ENCODE measurements at regions of chr5 and their contacts with region 1.

Region 1: DNA sequence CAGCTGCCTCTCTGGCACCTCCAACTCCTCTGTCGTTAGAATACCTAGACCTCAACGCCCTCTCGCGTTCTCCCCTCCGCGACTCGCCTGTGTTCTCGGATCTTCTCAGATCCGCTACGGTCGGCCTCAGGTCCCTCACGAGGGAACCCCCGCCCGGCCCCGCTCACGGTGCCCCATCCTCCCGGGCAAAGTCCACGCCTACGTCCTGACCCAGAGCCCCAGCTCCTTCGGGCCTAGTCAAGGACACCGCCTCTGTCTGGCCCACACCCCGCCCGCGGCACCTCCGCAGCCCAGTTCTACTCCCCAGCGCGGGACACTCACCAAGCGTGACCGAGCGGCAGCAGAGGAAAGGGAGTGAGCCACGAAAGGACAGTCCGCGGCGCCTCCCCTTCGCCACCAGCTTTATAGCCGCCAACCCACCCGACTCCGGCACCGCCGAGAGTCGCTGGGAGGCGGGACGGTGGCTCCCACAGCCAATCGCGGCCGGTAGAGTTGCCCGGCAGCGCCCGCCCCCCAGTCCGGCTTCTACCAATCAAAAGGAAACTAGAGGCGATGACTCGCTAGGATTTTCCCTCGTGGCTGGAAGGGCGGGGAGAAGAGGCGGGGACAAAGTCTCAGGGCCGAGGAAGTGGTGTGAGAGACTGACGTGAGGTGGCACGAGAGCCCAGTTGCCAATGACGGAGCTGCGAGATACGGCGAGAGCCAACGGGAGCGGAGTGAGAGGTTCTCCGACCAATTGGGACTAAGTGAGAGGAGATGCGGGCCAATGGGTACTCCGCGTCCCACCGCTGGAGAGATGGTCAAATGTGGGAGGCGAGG is at the start of gene HMGCS1:
- DNase-seq: peak; percentile 99
- H3K4me3 Mint-ChIP-seq: peak within 1 kb of the TSS; percentile 96
- H3K27ac Mint-ChIP-seq: peak within 1 kb of the TSS; percentile 94
- H3K4me1 Mint-ChIP-seq: peaks cover 72% of the 10 kb centered on the region
- H3K27me3 Mint-ChIP-seq: peaks cover 2% of the 10 kb centered on the region
- total RNA-seq, gene HMGCS1: 158 to 162 TPM

Region 2: DNA sequence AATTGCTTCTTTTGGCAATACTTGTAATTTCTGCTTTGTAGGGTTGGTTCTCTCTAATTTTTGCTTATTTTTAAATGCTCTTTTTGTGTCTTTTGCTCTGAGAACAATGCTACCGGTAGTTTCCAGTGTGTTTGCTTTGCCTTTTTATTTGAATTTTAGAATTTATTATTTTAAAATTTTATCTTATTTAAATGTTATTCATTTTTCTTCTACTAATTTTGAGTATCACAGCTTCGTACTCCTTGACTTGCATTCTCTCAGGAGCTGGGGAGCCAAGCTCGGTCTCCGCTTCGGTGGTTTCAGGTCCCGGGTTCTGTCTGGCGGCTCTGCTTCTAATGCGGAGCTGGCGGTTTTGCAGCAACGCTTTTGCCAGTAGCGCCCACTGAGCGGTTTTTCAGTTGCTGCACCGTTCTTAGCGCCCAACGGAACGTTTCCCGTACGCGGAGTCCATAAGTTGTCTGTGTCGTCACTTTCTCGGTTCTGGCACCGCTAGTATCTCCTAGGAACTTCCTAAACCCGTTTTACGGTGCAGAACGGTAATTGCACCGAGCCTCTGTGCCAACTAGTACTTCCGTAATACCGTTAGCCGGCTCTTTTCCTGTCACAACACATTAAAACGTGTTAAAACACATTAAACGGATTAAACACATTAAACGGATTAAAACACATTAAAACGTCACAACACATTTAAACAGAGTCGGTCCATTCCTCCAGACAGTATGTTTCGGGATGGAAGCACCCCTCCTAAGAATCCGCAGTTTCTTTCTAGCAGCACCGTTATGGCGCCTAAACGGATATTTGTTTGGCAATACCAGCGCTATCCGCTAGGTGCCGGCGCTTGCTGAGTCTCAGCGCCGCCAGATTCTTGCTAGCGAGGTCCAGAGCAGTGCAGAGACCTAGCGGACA is 318.7 kb before region 1 on chr5:
- CTCF ChIA-PET with region 1: no interaction called
- POLR2A ChIA-PET with region 1: interaction called, 4 read pairs
- intact Hi-C with region 1: loop called (anchors 2 kb)
- DNase-seq: peak; percentile 93
- H3K4me3 Mint-ChIP-seq: peak overlapping the region; percentile 87
- H3K27ac Mint-ChIP-seq: peak overlapping the region; percentile 94
- H3K4me1 Mint-ChIP-seq: peaks cover 25% of the 10 kb centered on the region
- H3K27me3 Mint-ChIP-seq: no peaks in the 10 kb centered on the region

Region 3: GRCh38 chr5:43105369-43106289 is 207.6 kb before region 1 on chr5:
- CTCF ChIA-PET with region 1: interaction called, 17 read pairs
- POLR2A ChIA-PET with region 1: interaction called, 4 read pairs
- intact Hi-C with region 1: loop called (anchors 1 kb)
- DNase-seq: peak; percentile 92
- H3K4me3 Mint-ChIP-seq: peak overlapping the region; percentile 75
- H3K27ac Mint-ChIP-seq: peak overlapping the region; percentile 79
- H3K4me1 Mint-ChIP-seq: peaks cover 49% of the 10 kb centered on the region
- H3K27me3 Mint-ChIP-seq: no peaks in the 10 kb centered on the region

Region 4: GRCh38 chr5:43281840-43282658 is 31.2 kb before region 1 on chr5:
- CTCF ChIA-PET with region 1: no interaction called
- POLR2A ChIA-PET with region 1: no interaction called
- intact Hi-C with region 1: loop called (anchors 1 kb)
- DNase-seq: peak; percentile 62
- H3K4me3 Mint-ChIP-seq: no peak overlapping the region
- H3K27ac Mint-ChIP-seq: no peak overlapping the region
- H3K4me1 Mint-ChIP-seq: peaks cover 21% of the 10 kb centered on the region
- H3K27me3 Mint-ChIP-seq: no peaks in the 10 kb centered on the region

Region 5: GRCh38 chr5:43484106-43484849 is 171.0 kb after region 1 on chr5:
- CTCF ChIA-PET with region 1: interaction called, 20 read pairs
- POLR2A ChIA-PET with region 1: interaction called, 31 read pairs
- intact Hi-C with region 1: loop called (anchors 1 kb)
- DNase-seq: peak; percentile 93
- H3K4me3 Mint-ChIP-seq: peak overlapping the region; percentile 98
- H3K27ac Mint-ChIP-seq: peak overlapping the region; percentile 100
- H3K4me1 Mint-ChIP-seq: peaks cover 49% of the 10 kb centered on the region
- H3K27me3 Mint-ChIP-seq: no peaks in the 10 kb centered on the region

Region 6: DNA sequence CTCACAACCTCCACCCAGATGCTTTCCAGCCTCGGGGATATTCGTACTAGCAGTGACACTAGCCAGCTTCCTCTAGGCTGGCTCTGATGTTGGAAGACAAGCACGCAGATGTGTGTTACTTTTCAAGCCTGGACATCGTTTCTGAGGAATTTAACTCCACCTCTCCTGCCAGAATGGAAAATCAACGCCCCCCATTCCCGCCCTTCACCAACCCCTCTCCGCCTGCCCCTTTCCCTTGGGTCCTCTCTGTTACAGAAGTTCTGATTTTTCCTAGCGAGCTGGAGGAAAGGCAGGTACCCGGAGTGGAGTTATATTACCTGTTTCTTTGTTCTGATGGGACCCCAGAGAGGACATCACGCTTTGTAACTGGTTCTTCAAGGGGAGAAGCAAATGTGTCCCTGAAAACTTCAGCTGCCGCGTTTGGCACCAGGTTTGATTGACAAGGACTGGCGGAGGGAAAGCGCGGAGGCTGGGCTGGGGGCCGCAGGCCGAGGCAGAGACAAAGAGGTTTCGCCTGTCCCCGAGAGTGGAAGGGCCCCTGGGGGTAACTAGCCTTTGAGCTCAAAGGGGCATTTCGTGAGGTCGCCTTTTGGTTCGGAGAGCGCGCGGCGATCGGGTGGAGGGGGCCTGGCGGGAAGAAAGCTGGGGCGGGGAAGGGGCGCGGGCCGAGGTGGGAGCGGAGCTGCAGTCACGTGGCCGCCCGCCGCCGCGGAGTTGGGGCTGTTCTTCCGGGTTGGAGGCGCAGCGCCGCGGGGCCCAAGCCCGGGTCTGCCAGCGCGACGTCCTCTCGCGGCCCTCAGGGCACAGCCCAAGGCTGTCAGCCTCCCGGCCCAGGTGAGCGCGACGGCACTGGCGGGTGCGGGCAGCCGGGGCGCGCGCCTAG is 289.5 kb after region 1 on chr5 and contains the start of gene NNT:
- CTCF ChIA-PET with region 1: no interaction called
- POLR2A ChIA-PET with region 1: interaction called, 3 read pairs
- intact Hi-C with region 1: loop called (anchors 1 kb)
- DNase-seq: peak; percentile 84
- H3K4me3 Mint-ChIP-seq: peak within 1 kb of the TSS; percentile 97
- H3K27ac Mint-ChIP-seq: peak within 1 kb of the TSS; percentile 93
- H3K4me1 Mint-ChIP-seq: peaks cover 35% of the 10 kb centered on the region
- H3K27me3 Mint-ChIP-seq: no peaks in the 10 kb centered on the region
- total RNA-seq, gene NNT: 96.6 to 99.9 TPM